Naive thymus-derived CD4-positive, alpha-beta T cell (primary cell): ENCODE measurements at regions of chr3 and their contacts with region 1.

Region 1: DNA sequence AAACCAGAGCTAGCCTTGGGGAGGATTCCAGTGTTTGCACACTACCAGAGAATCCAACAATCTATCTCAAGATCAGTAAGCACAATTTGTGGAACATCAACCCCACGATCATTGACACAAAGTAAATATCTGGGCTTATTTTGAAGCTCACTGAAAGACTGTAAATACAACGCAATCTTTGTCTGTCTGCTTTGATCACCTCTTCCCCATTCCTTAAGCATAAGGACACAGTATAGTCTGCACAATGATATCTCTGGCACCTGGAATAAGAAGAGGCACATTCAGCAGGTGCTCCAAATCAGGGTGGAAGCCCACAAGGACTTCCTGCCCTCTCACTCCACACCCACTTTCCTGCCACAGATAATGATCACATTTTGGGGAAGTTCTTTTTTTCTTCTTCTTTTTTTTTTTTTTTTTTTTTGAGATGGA is 26.0 kb downstream of the BTLA start:
- DNase-seq: peak in 6 of 9 donors; percentile 15 to 45 (median 24)
- ATAC-seq: peak; percentile 81
- H3K4me3 ChIP-seq: no peak overlapping the region
- H3K4me3 Mint-ChIP-seq: peak overlapping the region; percentile 70 to 86 (median 82)
- H3K27ac ChIP-seq: peak overlapping the region; percentile 20
- H3K27ac Mint-ChIP-seq: peak overlapping the region; percentile 81 to 96 (median 91)
- H3K4me1 ChIP-seq: peaks cover 32 to 58% of the 10 kb centered on the region in 2 donors
- H3K4me1 Mint-ChIP-seq: peaks cover 58 to 98% (median 78%) of the 10 kb centered on the region in 7 donors
- H3K27me3 ChIP-seq: no peaks in the 10 kb centered on the region
- H3K27me3 Mint-ChIP-seq: no peaks in the 10 kb centered on the region

Region 2: DNA sequence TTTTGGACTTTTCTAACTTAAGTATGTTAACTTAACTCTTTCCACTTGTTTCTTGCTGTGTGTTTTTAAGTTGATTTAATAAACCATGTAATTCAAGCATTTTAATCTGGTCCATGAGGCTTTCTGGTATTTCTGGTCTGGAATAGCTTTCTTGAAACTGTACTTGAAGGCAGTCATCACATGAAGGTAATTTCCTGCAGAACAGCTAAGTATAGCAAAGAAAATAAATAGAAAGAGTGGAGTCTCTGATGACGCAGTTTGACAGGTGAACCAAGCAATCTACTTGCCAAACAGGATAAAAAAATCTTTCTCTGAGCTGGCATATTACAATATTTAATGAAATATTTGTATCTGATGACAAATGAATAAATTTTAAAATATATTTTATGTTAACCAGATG is 48.8 kb before region 1 on chr3:
- CTCF ChIA-PET with region 1: no interaction called
- POLR2A ChIA-PET with region 1: no interaction called
- intact Hi-C with region 1: no loop called
- DNase-seq: no peak
- ATAC-seq: no peak
- H3K4me3 ChIP-seq: no peak overlapping the region
- H3K4me3 Mint-ChIP-seq: no peak overlapping the region
- H3K27ac ChIP-seq: no peak overlapping the region
- H3K27ac Mint-ChIP-seq: no peak overlapping the region
- H3K4me1 ChIP-seq: no peaks in the 10 kb centered on the region
- H3K4me1 Mint-ChIP-seq: peaks cover 0 to 7% (median 0%) of the 10 kb centered on the region in 7 donors
- H3K27me3 ChIP-seq: no peaks in the 10 kb centered on the region
- H3K27me3 Mint-ChIP-seq: peaks cover 0 to 3% (median 0%) of the 10 kb centered on the region in 5 donors

Region 3: DNA sequence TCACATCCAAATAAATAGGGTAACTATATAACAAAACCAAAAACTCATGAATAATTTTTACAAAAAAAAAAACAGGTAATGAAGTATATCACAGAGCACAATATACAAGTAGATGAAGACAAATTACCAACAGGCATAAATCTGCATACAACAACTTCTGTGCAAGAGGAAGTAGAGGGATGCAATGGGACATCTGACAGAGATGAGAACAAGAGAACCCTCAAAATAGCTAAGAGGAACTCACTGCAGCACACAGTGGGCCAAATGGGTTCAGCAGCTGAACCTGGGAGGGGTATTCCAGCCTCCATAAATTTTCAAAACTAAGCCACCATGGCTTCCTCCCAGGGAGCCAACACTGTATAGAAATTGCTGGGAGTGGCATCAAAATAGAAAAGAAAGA is 35.6 kb after region 1 on chr3:
- CTCF ChIA-PET with region 1: no interaction called
- POLR2A ChIA-PET with region 1: no interaction called
- intact Hi-C with region 1: no loop called
- DNase-seq: no peak
- ATAC-seq: no peak
- H3K4me3 ChIP-seq: no peak overlapping the region
- H3K4me3 Mint-ChIP-seq: no peak overlapping the region
- H3K27ac ChIP-seq: no peak overlapping the region
- H3K27ac Mint-ChIP-seq: peak overlapping the region in 1 of 9 donors; percentile 36
- H3K4me1 ChIP-seq: no peaks in the 10 kb centered on the region
- H3K4me1 Mint-ChIP-seq: peaks cover 10 to 34% (median 27%) of the 10 kb centered on the region in 7 donors
- H3K27me3 ChIP-seq: no peaks in the 10 kb centered on the region
- H3K27me3 Mint-ChIP-seq: no peaks in the 10 kb centered on the region

Region 4: DNA sequence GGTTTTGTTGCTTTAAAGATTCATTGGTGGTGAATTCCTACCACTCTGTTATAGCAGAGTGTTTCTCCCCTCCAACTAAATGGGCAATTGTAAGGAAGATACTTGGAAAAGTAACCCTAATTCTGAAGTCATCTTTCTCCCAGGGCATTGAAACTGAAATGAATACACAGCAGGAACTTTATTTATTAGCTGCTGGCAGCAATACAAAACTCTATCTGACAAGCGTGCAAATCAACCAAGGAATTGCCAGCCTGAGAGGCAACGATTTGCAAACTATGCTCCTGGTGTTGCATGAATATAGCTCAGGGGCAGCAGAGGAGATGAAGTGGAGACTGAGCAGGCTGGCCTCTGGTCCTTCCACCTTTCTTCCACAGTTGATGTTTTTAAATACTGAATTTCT is 452.7 kb after region 1 on chr3:
- CTCF ChIA-PET with region 1: no interaction called
- POLR2A ChIA-PET with region 1: no interaction called
- intact Hi-C with region 1: no loop called
- DNase-seq: no peak
- ATAC-seq: no peak
- H3K4me3 ChIP-seq: no peak overlapping the region
- H3K4me3 Mint-ChIP-seq: no peak overlapping the region
- H3K27ac ChIP-seq: no peak overlapping the region
- H3K27ac Mint-ChIP-seq: peak overlapping the region in 5 of 9 donors; percentile 20 to 79 (median 68)
- H3K4me1 ChIP-seq: no peaks in the 10 kb centered on the region
- H3K4me1 Mint-ChIP-seq: peaks cover 0 to 35% (median 14%) of the 10 kb centered on the region in 7 donors
- H3K27me3 ChIP-seq: no peaks in the 10 kb centered on the region
- H3K27me3 Mint-ChIP-seq: no peaks in the 10 kb centered on the region

Region 5: DNA sequence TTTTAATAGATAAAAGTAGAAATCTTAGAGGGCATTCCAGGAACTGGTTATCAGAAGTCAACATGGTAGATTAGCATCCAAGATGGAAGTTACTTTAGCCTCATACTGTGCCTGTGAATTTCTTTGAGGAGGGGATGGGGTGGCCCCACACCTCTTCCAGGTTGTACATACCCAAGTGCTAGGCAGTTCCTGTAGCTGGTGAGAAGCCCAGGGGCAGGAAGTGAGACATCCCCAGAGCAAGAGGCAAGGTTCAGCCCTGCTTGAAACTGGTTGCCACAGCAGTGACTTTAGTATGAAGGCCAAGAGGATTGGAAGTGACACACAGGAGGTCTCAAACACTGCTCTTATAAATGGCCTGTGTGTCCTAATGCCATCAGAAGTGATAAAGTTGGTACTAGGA is 529.5 kb after region 1 on chr3:
- CTCF ChIA-PET with region 1: no interaction called
- POLR2A ChIA-PET with region 1: no interaction called
- intact Hi-C with region 1: loop called (anchors 10 kb)
- DNase-seq: peak in 7 of 9 donors; percentile 27 to 53 (median 41)
- ATAC-seq: peak; percentile 50
- H3K4me3 ChIP-seq: no peak overlapping the region
- H3K4me3 Mint-ChIP-seq: peak overlapping the region in 8 of 10 donors; percentile 19 to 70 (median 48)
- H3K27ac ChIP-seq: peak overlapping the region; percentile 78
- H3K27ac Mint-ChIP-seq: peak overlapping the region; percentile 74 to 98 (median 89)
- H3K4me1 ChIP-seq: peaks cover 22 to 61% of the 10 kb centered on the region in 2 donors
- H3K4me1 Mint-ChIP-seq: peaks cover 33 to 99% (median 91%) of the 10 kb centered on the region in 7 donors
- H3K27me3 ChIP-seq: no peaks in the 10 kb centered on the region
- H3K27me3 Mint-ChIP-seq: no peaks in the 10 kb centered on the region